Breast epithelium (tissue), 4 donors: ENCODE measurements at regions of chr13 and their contacts with region 1.

Region 1: DNA sequence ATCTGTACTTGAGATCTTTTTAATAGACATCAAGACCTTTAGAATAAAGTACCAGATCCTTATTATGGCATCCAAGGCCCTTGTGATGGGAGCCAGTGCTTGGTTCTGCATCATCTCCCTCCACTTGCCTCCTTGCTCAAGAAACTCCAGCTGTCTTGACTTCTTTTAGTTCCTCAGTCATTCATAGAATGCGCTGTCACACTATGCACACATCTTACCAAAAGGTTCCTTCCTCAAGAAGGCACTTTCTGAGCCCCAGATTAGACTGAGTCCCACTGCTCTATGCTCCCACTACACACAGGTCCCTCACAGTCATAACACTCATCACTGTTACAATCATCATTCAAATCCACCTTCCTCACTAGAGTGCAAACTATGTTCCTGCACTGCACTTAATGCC is 57.8 kb upstream of the ITM2B start:
- DNase-seq: no peak
- H3K4me3 ChIP-seq: no peak overlapping the region
- H3K27ac ChIP-seq: no peak overlapping the region
- H3K4me1 ChIP-seq: no peaks in the 10 kb centered on the region
- H3K27me3 ChIP-seq: no peaks in the 10 kb centered on the region
- CTCF ChIP-seq: no peak
- POLR2A ChIP-seq: no peak

Region 2: DNA sequence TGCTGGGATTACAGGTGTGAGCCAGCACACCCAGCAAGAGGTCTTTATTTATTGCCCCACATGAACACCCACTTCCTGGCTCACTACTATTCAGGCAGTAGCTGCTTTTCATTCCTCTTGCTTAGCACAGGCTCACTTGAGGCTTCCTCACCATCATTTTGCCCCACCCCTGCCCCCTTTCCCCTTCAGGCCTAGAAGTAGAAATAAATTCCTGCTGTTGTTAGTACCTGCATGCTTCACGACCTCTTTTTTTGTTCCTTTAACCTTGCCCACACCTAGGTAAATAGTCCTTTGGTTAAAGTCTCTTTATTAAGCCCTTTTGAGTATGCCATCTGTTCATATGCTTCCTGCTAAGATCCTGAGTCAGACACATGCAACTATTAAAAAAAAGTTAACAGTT is 24.3 kb after region 1 on chr13:
- intact Hi-C with region 1: loop called (anchors 1 kb)
- DNase-seq: no peak
- H3K4me3 ChIP-seq: no peak overlapping the region
- H3K27ac ChIP-seq: no peak overlapping the region
- H3K4me1 ChIP-seq: no peaks in the 10 kb centered on the region
- H3K27me3 ChIP-seq: no peaks in the 10 kb centered on the region
- CTCF ChIP-seq: no peak
- POLR2A ChIP-seq: no peak